Tibial artery (tissue), 4 donors: ENCODE measurements at regions of chr21 and their contacts with region 1.

Region 1: GRCh38 chr21:27700974-27701614 is 734.2 kb upstream of the ADAMTS5 start:
- DNase-seq: peak; percentile 80 to 88
- H3K4me3 ChIP-seq: no peak overlapping the region
- H3K27ac ChIP-seq: no peak overlapping the region
- H3K4me1 ChIP-seq: no peaks in the 10 kb centered on the region
- H3K27me3 ChIP-seq: no peaks in the 10 kb centered on the region
- CTCF ChIP-seq: peak; percentile 82 to 92

Region 2: DNA sequence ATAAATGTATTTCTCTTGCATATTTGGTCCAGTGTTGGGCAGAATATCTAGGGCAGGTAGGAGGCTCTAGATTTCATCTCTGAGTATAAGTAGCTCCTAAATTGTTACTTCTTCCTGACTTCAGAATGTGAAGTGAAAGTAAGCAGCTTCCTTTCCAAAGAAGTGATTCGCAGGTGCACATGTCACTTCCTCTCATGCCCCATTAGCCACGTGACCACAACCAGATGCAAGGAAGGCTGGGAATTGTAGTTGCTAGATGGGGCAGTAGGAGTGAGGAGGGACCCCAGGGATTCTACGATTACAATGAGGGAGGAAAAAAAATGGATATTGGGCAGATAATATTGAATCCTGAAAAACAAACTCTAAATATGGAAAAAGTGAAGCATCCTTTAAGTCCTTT is 1014.8 kb before region 1 on chr21:
- intact Hi-C with region 1: no loop called
- DNase-seq: no peak
- H3K4me3 ChIP-seq: no peak overlapping the region
- H3K27ac ChIP-seq: no peak overlapping the region
- H3K4me1 ChIP-seq: no peaks in the 10 kb centered on the region
- H3K27me3 ChIP-seq: no peaks in the 10 kb centered on the region
- CTCF ChIP-seq: no peak

Region 3: GRCh38 chr21:26967062-26967913 is 733.8 kb before region 1 on chr21 and contains the start of gene ADAMTS5:
- intact Hi-C with region 1: loop called (anchors 10 kb)
- DNase-seq: peak; percentile 59 to 74
- H3K4me3 ChIP-seq: peak within 1 kb of the TSS; percentile 62 to 75
- H3K27ac ChIP-seq: peak within 1 kb of the TSS; percentile 67 to 70
- H3K4me1 ChIP-seq: peaks cover 0 to 40% (median 14%) of the 10 kb centered on the region in 4 donors
- H3K27me3 ChIP-seq: peaks cover 0 to 4% of the 10 kb centered on the region in 2 donors
- CTCF ChIP-seq: no peak